AG04449 (cell line): ENCODE measurements at regions of chr11 and their contacts with region 1.

Region 1: GRCh38 chr11:108654994-108655631 is 9.8 kb upstream of the DDX10 start:
- DNase-seq: no peak
- H3K4me3 ChIP-seq: no peak overlapping the region
- CTCF ChIP-seq: peak; percentile 38

Region 2: GRCh38 chr11:108117746-108118371 is 537.3 kb before region 1 on chr11:
- CTCF ChIA-PET with region 1: interaction called, 83 read pairs
- POLR2A ChIA-PET with region 1: no interaction called
- DNase-seq: no peak
- H3K4me3 ChIP-seq: no peak overlapping the region
- CTCF ChIP-seq: peak; percentile 41

Region 3: GRCh38 chr11:109000531-109000930 is 345.4 kb after region 1 on chr11:
- CTCF ChIA-PET with region 1: no interaction called
- POLR2A ChIA-PET with region 1: no interaction called
- DNase-seq: no peak
- H3K4me3 ChIP-seq: no peak overlapping the region
- CTCF ChIP-seq: no peak